Caco-2 (cell line): ENCODE measurements at regions of chr13 and their contacts with region 1.

Region 1: GRCh38 chr13:106858908-106859904 is 291.3 kb upstream of the ARGLU1 start:
- DNase-seq: peak; percentile 63 to 75
- H3K4me3 ChIP-seq: no peak overlapping the region
- H3K4me3 Mint-ChIP-seq: peak overlapping the region; percentile 41
- H3K27ac Mint-ChIP-seq: peak overlapping the region; percentile 80
- H3K4me1 ChIP-seq: peaks cover 44% of the 10 kb centered on the region
- H3K4me1 Mint-ChIP-seq: peaks cover 23% of the 10 kb centered on the region
- H3K27me3 ChIP-seq: no peaks in the 10 kb centered on the region
- H3K27me3 Mint-ChIP-seq: no peaks in the 10 kb centered on the region
- CTCF ChIP-seq: no peak

Region 2: GRCh38 chr13:106567474-106568298 is 291.5 kb before region 1 on chr13 and contains the start of gene ARGLU1:
- CTCF ChIA-PET with region 1: no interaction called
- POLR2A ChIA-PET with region 1: no interaction called
- intact Hi-C with region 1: loop called (anchors 5 kb)
- DNase-seq: peak; percentile 93 to 97
- H3K4me3 ChIP-seq: peak within 1 kb of the TSS; percentile 93
- H3K4me3 Mint-ChIP-seq: peak within 1 kb of the TSS; percentile 87
- H3K27ac Mint-ChIP-seq: peak within 1 kb of the TSS; percentile 95
- H3K4me1 ChIP-seq: peaks cover 41% of the 10 kb centered on the region
- H3K4me1 Mint-ChIP-seq: peaks cover 16% of the 10 kb centered on the region
- H3K27me3 ChIP-seq: no peaks in the 10 kb centered on the region
- H3K27me3 Mint-ChIP-seq: no peaks in the 10 kb centered on the region
- CTCF ChIP-seq: no peak
- total RNA-seq, gene ARGLU1: 127 and 137 TPM in 2 replicates

Region 3: DNA sequence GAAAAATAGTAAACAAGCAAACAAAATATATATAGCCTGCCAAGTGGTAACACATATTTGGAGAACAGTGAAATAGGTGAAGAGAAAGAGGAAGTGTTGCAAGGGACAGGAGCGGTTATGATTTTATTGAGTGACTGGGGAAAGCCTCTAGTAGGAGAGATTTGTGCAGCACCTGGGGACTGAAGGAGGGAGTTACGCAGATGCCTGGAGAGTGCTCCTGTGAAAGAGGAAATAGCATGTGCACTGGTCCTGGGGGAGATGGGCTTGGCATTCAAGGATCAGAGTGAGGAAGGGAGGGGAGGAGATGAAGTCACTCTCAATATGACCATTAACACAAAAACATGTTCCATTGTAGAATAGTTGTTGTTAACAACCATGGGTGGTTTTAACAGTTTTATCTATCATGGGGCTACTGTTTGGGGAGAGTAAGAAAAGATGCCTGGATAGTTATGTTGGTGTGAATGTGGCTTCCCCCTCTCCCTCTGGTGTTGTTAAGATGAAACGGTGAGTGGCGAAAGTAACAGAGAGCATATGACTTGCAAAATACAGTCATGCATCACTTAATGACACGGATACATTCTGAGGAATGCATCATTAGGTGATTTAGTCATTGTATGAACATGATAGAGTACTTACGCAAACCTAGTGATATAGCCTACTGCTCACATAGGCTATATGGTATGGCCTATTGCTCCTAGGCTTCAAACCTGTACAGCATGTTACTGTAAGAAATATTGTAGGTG is 39.6 kb before region 1 on chr13:
- CTCF ChIA-PET with region 1: no interaction called
- POLR2A ChIA-PET with region 1: no interaction called
- intact Hi-C with region 1: loop called (anchors 2 kb)
- DNase-seq: no peak
- H3K4me3 ChIP-seq: no peak overlapping the region
- H3K4me3 Mint-ChIP-seq: no peak overlapping the region
- H3K27ac Mint-ChIP-seq: peak overlapping the region; percentile 3
- H3K4me1 ChIP-seq: peaks cover 13% of the 10 kb centered on the region
- H3K4me1 Mint-ChIP-seq: peaks cover 19% of the 10 kb centered on the region
- H3K27me3 ChIP-seq: no peaks in the 10 kb centered on the region
- H3K27me3 Mint-ChIP-seq: no peaks in the 10 kb centered on the region
- CTCF ChIP-seq: no peak

Region 4: DNA sequence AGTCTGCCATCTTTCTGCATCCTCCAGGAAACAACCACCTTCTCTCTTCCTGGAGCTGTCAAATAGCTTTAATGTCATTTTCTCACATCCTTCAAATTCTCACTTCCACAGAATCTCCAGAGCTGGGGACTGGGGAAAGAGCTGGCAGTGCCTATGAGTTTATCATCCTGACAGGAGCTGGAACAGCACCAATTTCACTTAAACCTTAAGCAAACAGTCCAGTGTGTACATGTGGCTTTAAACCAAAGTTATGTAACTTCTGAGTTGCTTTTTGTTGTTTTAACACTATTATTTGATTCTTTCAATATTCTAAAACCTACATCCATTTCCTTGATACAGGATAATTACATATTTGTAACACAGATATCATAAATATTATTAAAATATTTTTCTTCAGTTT is 40.2 kb after region 1 on chr13:
- CTCF ChIA-PET with region 1: no interaction called
- POLR2A ChIA-PET with region 1: no interaction called
- intact Hi-C with region 1: loop called (anchors 1 kb)
- DNase-seq: peak; percentile 40 to 59
- H3K4me3 ChIP-seq: no peak overlapping the region
- H3K4me3 Mint-ChIP-seq: no peak overlapping the region
- H3K27ac Mint-ChIP-seq: no peak overlapping the region
- H3K4me1 ChIP-seq: peaks cover 7% of the 10 kb centered on the region; the same call in 1 of the 2 replicates
- H3K4me1 Mint-ChIP-seq: peaks cover 7% of the 10 kb centered on the region
- H3K27me3 ChIP-seq: no peaks in the 10 kb centered on the region
- H3K27me3 Mint-ChIP-seq: no peaks in the 10 kb centered on the region
- CTCF ChIP-seq: no peak

Region 5: GRCh38 chr13:107006661-107007060 is 147.5 kb after region 1 on chr13:
- CTCF ChIA-PET with region 1: no interaction called
- POLR2A ChIA-PET with region 1: no interaction called
- intact Hi-C with region 1: loop called (anchors 5 kb)
- DNase-seq: no peak
- H3K4me3 ChIP-seq: peak overlapping the region; percentile 1; the same call in 1 of the 2 replicates
- H3K4me3 Mint-ChIP-seq: peak overlapping the region; percentile 62
- H3K27ac Mint-ChIP-seq: peak overlapping the region; percentile 83
- H3K4me1 ChIP-seq: peaks cover 43% of the 10 kb centered on the region
- H3K4me1 Mint-ChIP-seq: peaks cover 43% of the 10 kb centered on the region
- H3K27me3 ChIP-seq: no peaks in the 10 kb centered on the region
- H3K27me3 Mint-ChIP-seq: no peaks in the 10 kb centered on the region
- CTCF ChIP-seq: no peak